Psoas muscle (tissue), 8 donors: ENCODE measurements at regions of chr5 and their contacts with region 1.

Region 1: DNA sequence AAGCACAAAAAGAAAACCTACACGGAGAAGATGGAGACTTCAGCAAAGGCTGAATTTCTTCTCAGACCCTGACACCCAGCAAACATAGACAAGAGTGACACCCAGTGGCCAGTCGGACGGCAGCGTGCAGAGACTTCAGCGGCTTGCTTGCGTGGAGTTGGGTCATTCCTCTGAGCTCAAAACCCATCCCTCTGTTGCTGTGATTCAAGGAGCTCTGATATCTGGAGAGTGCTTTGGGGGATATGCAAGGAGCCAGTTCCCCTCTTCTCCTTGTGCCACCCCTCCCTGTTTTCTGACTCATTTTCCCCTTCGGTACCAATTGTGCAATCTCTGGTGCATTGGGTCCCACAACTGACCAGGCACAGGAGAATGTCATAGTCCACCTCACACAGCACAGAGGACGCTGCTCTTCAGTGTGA is 27.5 kb downstream of the SH3TC2 start:
- DNase-seq: peak; percentile 74 to 83
- ATAC-seq: peak; percentile 91 to 98 (median 94)
- H3K4me3 ChIP-seq: no peak overlapping the region
- H3K27ac ChIP-seq: no peak overlapping the region
- H3K4me1 ChIP-seq: peaks cover 4% of the 10 kb centered on the region
- H3K27me3 ChIP-seq: no peaks in the 10 kb centered on the region
- CTCF ChIP-seq: peak; percentile 92

Region 2: DNA sequence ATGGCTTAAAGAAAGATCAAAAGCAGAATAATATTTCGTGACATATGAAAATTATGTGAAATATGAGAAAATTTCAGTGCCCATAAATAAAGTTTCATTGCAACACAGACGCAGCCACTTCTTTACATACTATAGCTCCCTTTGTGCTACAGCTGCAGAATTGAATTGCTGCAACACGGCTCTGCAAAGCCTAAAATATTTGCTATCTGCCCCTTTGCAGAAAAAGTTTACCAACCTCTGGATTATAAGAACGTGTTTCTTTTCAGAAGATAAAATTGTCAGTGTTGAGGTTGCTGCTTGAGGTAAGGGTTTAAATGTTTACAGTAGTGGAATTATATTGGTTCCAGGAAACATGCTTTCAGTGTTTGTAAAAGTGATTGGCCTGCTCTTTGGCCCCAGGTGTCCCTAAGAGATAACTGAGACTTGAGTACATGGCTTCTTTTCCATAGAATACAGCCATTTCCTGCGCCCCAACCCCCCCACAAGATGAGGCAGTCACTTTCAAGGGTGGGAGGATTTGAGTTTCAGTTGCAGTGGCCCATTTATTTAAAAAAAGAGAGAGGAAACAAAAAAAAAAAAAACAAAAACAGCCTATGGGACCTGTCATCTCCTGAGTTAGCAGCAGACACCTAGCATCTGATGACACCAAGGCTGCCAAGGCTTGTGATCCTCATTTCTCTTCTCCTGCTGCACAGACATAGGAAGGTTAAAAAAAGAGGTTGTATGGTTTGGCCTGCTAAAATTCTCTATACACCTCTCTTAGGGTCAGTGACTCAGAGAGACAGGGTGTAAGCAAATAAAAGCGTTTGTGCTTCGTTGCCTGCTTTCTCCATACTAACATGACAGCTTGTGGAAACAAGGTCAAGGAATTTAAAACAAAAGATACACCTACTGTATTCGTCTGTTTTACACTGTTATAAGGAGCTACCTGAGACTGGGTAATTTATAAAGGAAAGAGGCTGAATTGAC is 353.0 kb before region 1 on chr5:
- intact Hi-C with region 1: no loop called
- DNase-seq: no peak
- ATAC-seq: no peak
- H3K4me3 ChIP-seq: no peak overlapping the region
- H3K27ac ChIP-seq: no peak overlapping the region
- H3K4me1 ChIP-seq: no peaks in the 10 kb centered on the region
- H3K27me3 ChIP-seq: no peaks in the 10 kb centered on the region
- CTCF ChIP-seq: no peak

Region 3: GRCh38 chr5:148730943-148731861 is 304.2 kb before region 1 on chr5:
- intact Hi-C with region 1: loop called (anchors 1 to 2 kb)
- DNase-seq: peak; percentile 32 to 60
- ATAC-seq: peak; percentile 64 to 88 (median 81)
- H3K4me3 ChIP-seq: no peak overlapping the region
- H3K27ac ChIP-seq: no peak overlapping the region
- H3K4me1 ChIP-seq: no peaks in the 10 kb centered on the region
- H3K27me3 ChIP-seq: no peaks in the 10 kb centered on the region
- CTCF ChIP-seq: peak; percentile 89

Region 4: DNA sequence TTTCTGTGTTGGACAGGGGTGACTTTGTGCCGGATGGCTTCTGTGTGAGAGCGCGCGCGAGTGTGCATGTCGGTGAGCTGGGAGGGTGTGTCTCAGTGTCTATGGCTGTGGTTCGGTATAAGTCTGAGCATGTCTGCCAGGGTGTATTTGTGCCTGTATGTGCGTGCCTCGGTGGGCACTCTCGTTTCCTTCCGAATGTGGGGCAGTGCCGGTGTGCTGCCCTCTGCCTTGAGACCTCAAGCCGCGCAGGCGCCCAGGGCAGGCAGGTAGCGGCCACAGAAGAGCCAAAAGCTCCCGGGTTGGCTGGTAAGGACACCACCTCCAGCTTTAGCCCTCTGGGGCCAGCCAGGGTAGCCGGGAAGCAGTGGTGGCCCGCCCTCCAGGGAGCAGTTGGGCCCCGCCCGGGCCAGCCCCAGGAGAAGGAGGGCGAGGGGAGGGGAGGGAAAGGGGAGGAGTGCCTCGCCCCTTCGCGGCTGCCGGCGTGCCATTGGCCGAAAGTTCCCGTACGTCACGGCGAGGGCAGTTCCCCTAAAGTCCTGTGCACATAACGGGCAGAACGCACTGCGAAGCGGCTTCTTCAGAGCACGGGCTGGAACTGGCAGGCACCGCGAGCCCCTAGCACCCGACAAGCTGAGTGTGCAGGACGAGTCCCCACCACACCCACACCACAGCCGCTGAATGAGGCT is 209.2 kb before region 1 on chr5 and contains the start of gene ADRB2:
- intact Hi-C with region 1: loop called (anchors 10 kb)
- DNase-seq: peak; percentile 93 to 97
- ATAC-seq: peak; percentile 90 to 94 (median 92)
- H3K4me3 ChIP-seq: peak within 1 kb of the TSS; percentile 86
- H3K27ac ChIP-seq: peak within 1 kb of the TSS; percentile 96
- H3K4me1 ChIP-seq: peaks cover 30% of the 10 kb centered on the region
- H3K27me3 ChIP-seq: no peaks in the 10 kb centered on the region
- CTCF ChIP-seq: no peak
- total RNA-seq, gene ADRB2: 4.8 to 11.1 (median 7.9) TPM

Region 5: GRCh38 chr5:148949841-148950470 is 85.4 kb before region 1 on chr5:
- intact Hi-C with region 1: loop called in 1 of 2 experiments (anchors 5 kb)
- DNase-seq: peak; percentile 73 to 93
- ATAC-seq: peak; percentile 92 to 95 (median 95)
- H3K4me3 ChIP-seq: peak overlapping the region; percentile 29
- H3K27ac ChIP-seq: peak overlapping the region; percentile 97
- H3K4me1 ChIP-seq: peaks cover 22% of the 10 kb centered on the region
- H3K27me3 ChIP-seq: no peaks in the 10 kb centered on the region
- CTCF ChIP-seq: no peak